ENCODE measurements at regions of chr17 and their contacts with region 1.

Region 1: GRCh38 chr17:43388359-43389045 is 10.3 kb upstream of the ARL4D start:
- DNase-seq: peak; percentile 94
- H3K4me3 Mint-ChIP-seq: peak overlapping the region; percentile 87
- H3K27ac Mint-ChIP-seq: peak overlapping the region; percentile 97
- H3K4me1 Mint-ChIP-seq: peaks cover 18% of the 10 kb centered on the region
- H3K27me3 Mint-ChIP-seq: no peaks in the 10 kb centered on the region

Region 2: GRCh38 chr17:43360739-43361505 is 27.6 kb before region 1 on chr17:
- CTCF ChIA-PET with region 1: interaction called, 11 read pairs
- POLR2A ChIA-PET with region 1: interaction called, 49 read pairs
- intact Hi-C with region 1: loop called (anchors 1 kb)
- DNase-seq: peak; percentile 93
- H3K4me3 Mint-ChIP-seq: peak overlapping the region; percentile 86
- H3K27ac Mint-ChIP-seq: peak overlapping the region; percentile 99
- H3K4me1 Mint-ChIP-seq: peaks cover 29% of the 10 kb centered on the region
- H3K27me3 Mint-ChIP-seq: peaks cover 11% of the 10 kb centered on the region

Region 3: DNA sequence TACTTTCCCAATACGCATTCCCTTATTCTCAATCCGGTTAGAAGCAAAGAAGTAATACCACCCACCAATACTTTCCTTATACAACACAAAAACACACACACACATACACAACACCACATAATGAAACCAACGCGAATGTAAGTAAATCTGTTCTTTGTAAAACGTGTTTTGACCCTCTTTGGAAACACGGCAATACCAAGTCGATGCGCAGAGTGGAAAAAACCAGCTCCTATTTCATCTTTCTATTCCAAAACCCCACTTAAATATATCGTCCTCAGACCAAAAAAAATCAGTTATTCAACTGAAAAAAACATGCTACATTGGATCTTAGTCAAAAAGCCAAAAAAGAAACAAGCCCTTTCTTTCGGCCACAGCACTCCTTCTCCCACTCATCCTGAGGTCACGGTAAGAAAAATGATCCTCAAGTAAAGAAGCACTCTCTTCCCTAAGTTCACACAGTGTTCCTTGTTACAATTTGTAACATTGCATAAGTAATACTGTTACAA is 20.7 kb before region 1 on chr17:
- CTCF ChIA-PET with region 1: interaction called, 16 read pairs
- POLR2A ChIA-PET with region 1: interaction called, 115 read pairs
- intact Hi-C with region 1: loop called (anchors 1 kb)
- DNase-seq: peak; percentile 49
- H3K4me3 Mint-ChIP-seq: peak overlapping the region; percentile 94
- H3K27ac Mint-ChIP-seq: peak overlapping the region; percentile 100
- H3K4me1 Mint-ChIP-seq: peaks cover 36% of the 10 kb centered on the region
- H3K27me3 Mint-ChIP-seq: no peaks in the 10 kb centered on the region